Panc1 (cell line): ENCODE measurements at regions of chr17 and their contacts with region 1.

Region 1: DNA sequence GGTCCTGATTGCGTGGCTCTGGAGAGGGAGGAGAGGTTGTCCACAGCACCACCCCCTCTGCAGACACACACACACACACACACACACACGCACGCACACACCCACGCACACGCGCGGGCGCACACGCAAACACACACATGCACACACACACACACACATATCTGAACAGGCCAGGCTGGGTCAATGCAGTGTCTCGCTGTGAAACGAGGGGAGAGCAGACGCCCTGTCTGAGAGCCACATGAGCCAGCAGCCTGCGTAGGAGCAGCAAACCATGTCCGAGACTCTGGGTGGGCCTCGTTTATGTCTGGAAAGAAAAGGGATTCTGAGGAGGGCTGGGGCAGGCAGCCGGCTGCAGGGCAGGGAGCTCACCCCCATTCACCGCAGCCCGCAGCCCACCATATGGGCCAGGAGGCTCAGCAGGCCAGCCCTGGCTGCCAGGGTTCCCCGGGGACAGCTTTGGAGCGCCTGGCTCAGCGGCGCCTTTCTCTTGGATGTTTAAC is 93.3 kb upstream of the TNRC6C start:
- DNase-seq: no peak
- ATAC-seq: no peak
- H3K4me3 ChIP-seq: no peak overlapping the region
- H3K27ac ChIP-seq: no peak overlapping the region
- H3K4me1 ChIP-seq: no peaks in the 10 kb centered on the region; the same call in 1 of the 2 replicates
- H3K27me3 ChIP-seq: peaks cover 7% of the 10 kb centered on the region
- CTCF ChIP-seq: no peak

Region 2: DNA sequence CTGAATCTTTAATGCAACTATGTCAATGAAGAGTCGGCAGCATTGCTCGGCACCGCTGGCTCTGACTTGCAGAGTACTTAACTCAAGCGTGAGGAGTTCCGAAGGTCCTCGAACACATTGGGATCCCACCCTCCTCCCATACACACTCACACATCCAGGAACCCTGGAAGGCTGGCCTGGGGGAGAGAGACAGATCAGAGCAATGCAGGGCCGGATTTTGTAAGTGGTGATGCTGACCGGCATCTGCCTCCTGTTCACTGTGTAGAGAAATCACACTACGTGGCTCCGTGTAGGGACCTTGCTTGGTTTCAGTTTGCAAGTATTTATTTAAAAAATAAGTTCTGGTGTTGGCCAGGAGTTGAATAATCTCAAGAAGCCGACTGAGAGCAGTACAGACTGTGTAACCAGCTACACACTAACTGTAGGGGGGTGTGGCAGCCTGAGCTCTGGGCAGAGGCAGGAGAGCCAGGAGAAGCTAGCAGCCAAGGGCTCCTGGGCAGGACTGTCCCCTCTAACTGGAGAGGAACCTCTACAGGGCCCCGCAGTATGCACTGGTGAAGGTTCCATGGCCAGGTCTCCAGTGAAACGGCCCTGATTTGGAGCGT is 96.8 kb before region 1 on chr17:
- CTCF ChIA-PET with region 1: no interaction called
- POLR2A ChIA-PET with region 1: no interaction called
- in situ Hi-C with region 1: no loop called
- intact Hi-C with region 1: no loop called
- DNase-seq: no peak
- ATAC-seq: no peak
- H3K4me3 ChIP-seq: no peak overlapping the region
- H3K27ac ChIP-seq: no peak overlapping the region
- H3K4me1 ChIP-seq: peaks cover 3% of the 10 kb centered on the region; the same call in 1 of the 2 replicates
- H3K27me3 ChIP-seq: peaks cover 3% of the 10 kb centered on the region; the same call in 1 of the 2 replicates
- CTCF ChIP-seq: no peak

Region 3: GRCh38 chr17:77836557-77837041 is 28.6 kb before region 1 on chr17:
- CTCF ChIA-PET with region 1: no interaction called
- POLR2A ChIA-PET with region 1: no interaction called
- in situ Hi-C with region 1: no loop called
- intact Hi-C with region 1: no loop called
- DNase-seq: no peak
- ATAC-seq: no peak
- H3K4me3 ChIP-seq: no peak overlapping the region
- H3K27ac ChIP-seq: no peak overlapping the region
- H3K4me1 ChIP-seq: peaks cover 8% of the 10 kb centered on the region; the same call in 1 of the 2 replicates
- H3K27me3 ChIP-seq: no peaks in the 10 kb centered on the region
- CTCF ChIP-seq: no peak

Region 4: DNA sequence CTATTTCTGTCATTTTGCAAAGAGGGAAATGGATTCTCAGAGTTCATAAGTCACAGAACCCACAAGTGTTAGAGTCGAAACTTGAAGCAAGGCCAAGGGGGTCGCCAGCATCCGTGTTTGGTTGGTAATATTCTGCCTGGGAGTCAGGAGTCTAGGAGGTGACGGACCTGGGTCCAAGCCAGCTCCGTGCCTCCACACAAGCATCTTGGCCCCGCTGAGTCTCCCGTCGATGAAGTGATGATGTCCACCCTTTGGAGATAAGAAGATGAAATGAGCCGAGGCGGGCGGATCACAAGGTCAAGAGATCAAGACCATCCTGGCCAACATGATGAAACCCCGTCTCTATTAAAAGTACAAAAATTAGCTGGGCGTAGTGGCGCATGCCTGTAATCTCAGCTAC is 40.1 kb after region 1 on chr17:
- CTCF ChIA-PET with region 1: no interaction called
- POLR2A ChIA-PET with region 1: interaction called, 12 read pairs
- in situ Hi-C with region 1: no loop called
- intact Hi-C with region 1: no loop called
- DNase-seq: no peak
- ATAC-seq: no peak
- H3K4me3 ChIP-seq: no peak overlapping the region
- H3K27ac ChIP-seq: no peak overlapping the region
- H3K4me1 ChIP-seq: no peaks in the 10 kb centered on the region
- H3K27me3 ChIP-seq: peaks cover 36% of the 10 kb centered on the region
- CTCF ChIP-seq: no peak

Region 5: DNA sequence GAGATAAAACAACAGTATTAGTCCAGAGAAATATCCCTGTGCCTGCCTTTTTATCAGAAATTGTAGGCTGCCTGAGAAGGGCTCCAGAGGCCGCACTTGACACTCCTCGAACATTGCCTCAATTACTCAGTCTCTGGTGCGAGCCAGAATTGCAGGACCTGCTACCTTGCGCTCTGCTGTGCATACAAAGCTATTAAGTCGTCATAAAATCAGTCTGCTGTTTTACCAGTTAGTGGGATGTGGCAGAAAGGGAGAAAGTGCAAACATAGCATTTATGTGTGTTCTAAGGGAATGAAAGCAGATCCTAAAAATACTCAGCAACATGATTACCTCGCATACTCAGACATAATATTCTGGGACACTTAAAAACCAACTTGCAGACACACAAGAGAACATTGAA is 192.8 kb after region 1 on chr17:
- CTCF ChIA-PET with region 1: interaction called, 11 read pairs
- POLR2A ChIA-PET with region 1: no interaction called
- in situ Hi-C with region 1: no loop called
- intact Hi-C with region 1: no loop called
- DNase-seq: no peak
- ATAC-seq: no peak
- H3K4me3 ChIP-seq: no peak overlapping the region
- H3K27ac ChIP-seq: no peak overlapping the region
- H3K4me1 ChIP-seq: no peaks in the 10 kb centered on the region
- H3K27me3 ChIP-seq: no peaks in the 10 kb centered on the region
- CTCF ChIP-seq: no peak

Region 6: DNA sequence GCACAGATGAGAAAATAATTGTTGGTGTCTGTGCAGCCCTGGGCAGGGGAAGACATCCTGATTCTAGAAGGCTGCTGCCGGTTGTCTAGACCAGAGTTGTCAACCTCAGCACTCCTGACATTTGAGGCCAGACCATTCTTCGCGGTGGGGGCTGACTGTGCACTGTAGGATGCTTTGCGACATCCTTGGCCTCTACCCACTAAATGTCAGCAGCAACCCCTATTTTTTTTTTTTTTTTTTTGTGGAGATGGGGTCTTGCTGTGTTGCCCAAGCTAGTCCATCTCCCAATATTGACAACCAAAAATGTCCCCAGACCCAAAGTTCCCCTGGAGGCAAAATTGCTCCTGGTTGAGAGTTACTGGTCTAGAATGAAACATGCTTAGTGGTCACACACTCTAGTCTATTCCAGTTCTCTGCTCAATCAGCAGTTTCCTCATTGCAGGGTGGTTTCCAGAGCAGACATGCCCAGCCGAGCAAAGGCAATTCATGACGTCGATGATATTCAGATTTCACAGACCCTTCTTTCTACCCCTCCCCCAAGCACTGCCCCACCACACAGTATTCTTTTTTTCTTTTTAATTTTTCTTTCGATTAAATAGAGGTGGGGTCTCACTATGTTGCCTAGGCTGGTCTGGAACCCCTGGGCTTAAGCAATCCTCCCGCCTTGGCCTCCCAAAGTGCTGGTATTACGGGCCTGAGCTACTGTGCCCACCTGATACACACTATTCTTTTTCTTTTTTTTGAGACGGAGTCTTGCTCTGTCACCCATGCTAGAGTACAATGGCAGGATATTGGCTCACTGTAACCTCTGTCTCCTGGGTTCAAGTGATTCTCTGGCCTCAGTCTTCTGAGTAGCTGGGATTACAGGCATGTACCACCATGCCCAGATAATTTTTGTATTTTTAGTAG is 290.0 kb after region 1 on chr17:
- CTCF ChIA-PET with region 1: no interaction called
- POLR2A ChIA-PET with region 1: no interaction called
- in situ Hi-C with region 1: no loop called
- intact Hi-C with region 1: no loop called
- DNase-seq: no peak
- ATAC-seq: no peak
- H3K4me3 ChIP-seq: no peak overlapping the region
- H3K27ac ChIP-seq: no peak overlapping the region
- H3K4me1 ChIP-seq: no peaks in the 10 kb centered on the region
- H3K27me3 ChIP-seq: no peaks in the 10 kb centered on the region
- CTCF ChIP-seq: no peak